ENCODE measurements at regions of chr2 and their contacts with region 1.

Region 1: DNA sequence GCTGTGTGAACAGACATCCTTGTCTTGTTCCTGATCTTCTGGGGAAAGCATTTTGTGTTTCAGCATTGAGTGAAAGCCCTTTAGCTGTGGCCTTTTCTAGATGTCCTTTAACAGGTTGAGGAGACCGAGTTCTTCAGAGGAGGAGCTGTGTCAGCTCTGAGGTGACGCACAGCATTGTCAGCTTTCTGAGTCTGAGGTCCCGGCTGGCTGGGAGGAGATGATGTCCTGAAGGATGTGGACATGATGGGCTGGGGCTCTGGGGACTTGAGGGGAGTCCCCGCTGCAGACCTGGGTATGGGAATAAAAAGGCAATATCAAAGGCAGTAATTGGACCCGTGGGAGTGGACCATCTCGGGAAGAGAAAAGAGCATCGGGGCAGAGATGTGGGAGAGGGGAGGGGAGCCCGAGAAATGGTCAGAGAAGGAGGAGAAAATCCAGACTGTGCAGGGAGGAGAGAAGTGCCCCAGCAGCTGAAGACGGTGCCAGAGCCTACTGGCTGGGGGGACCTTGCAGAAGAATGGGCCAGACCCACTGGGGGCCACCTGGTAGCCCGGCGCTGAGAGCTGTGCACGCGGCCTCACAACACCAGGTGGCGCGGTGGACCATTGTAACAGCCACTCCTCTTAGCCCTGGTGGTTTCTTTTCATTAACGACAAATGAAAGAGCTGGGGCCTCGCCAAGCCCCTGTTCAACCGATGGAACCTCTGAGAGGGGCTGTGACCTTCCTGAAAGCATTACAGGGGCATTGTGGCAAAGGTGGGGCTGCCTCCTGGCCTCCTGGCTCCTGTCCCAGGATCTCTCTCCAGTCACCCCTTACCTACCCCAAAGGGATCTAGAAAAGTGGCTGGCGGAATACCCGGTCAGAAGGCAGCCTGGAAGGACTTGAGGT is 61.6 kb downstream of the ST3GAL5 start:
- DNase-seq: no peak
- H3K4me3 ChIP-seq: no peak overlapping the region
- H3K27me3 ChIP-seq: no peaks in the 10 kb centered on the region; the same call in 1 of the 2 replicates
- CTCF ChIP-seq: peak; percentile 93

Region 2: GRCh38 chr2:85838181-85838580 is 10.9 kb after region 1 on chr2:
- CTCF ChIA-PET with region 1: interaction called, 15 read pairs
- POLR2A ChIA-PET with region 1: no interaction called
- DNase-seq: no peak
- H3K4me3 ChIP-seq: no peak overlapping the region
- H3K27me3 ChIP-seq: no peaks in the 10 kb centered on the region
- CTCF ChIP-seq: no peak

Region 3: DNA sequence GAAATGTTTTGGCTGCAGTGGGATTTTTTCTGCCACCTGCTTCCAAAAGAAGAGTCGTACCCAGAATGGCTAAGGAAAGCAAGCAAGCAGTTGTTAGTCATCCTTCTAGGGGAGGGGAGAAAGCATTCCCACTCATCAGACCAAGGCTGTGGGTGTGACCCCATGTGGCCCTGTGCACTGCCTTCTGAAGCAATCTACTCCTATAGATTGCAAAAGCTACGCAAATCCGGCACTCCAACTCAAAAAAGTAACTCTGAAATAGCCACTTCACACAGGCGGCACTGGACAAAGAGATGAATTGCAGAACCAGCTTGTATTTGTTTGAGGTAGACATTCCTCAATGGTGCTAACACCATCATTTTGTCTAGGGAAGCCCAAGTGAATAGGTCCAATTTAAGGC is 17.3 kb after region 1 on chr2:
- CTCF ChIA-PET with region 1: interaction called, 11 read pairs
- POLR2A ChIA-PET with region 1: no interaction called
- DNase-seq: no peak
- H3K4me3 ChIP-seq: no peak overlapping the region
- H3K27me3 ChIP-seq: no peaks in the 10 kb centered on the region
- CTCF ChIP-seq: no peak

Region 4: DNA sequence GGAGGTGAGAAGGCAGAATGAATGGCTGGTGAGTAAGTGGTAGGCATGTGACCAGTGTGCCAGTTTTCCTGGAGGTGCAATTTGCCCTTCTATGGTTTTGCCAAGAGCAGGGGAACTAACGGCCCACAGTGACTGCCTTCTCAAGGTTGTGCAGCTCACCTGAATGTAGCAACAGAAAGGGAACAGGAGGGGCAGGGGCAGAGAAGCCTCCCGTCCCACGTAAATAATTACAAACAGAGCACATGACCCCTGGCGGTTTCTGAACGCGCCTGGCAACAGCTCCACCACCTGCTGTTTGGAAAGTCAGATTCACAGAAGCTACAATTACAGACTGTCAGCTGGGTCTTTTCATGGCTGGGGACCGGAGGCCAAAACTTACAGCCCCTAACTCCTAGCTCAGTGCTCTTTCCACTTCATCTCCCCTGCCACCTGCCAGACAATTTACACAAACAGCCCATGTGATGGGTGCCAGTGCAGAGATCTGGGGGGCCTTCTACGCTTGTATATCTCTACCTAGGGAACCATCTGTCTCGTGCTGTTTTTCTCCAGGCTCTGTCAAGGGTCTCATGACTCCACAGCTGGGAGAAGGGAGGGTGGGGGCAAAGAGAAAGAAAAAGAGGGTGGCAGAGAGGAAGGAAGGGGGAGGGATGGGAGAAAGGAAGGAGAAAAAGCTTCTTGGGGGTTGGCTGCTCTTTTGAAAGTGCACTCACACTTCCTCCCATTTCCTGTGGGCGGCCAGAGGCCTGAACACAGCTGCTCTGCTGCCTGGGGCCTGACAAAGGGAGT is 208.8 kb after region 1 on chr2:
- CTCF ChIA-PET with region 1: interaction called, 14 read pairs
- POLR2A ChIA-PET with region 1: no interaction called
- DNase-seq: peak; percentile 53
- H3K4me3 ChIP-seq: no peak overlapping the region
- H3K27me3 ChIP-seq: no peaks in the 10 kb centered on the region
- CTCF ChIP-seq: peak; percentile 53

Region 5: GRCh38 chr2:86072271-86072858 is 245.1 kb after region 1 on chr2:
- CTCF ChIA-PET with region 1: interaction called, 354 read pairs
- POLR2A ChIA-PET with region 1: no interaction called
- DNase-seq: no peak
- H3K4me3 ChIP-seq: no peak overlapping the region
- H3K27me3 ChIP-seq: no peaks in the 10 kb centered on the region
- CTCF ChIP-seq: no peak

Region 6: DNA sequence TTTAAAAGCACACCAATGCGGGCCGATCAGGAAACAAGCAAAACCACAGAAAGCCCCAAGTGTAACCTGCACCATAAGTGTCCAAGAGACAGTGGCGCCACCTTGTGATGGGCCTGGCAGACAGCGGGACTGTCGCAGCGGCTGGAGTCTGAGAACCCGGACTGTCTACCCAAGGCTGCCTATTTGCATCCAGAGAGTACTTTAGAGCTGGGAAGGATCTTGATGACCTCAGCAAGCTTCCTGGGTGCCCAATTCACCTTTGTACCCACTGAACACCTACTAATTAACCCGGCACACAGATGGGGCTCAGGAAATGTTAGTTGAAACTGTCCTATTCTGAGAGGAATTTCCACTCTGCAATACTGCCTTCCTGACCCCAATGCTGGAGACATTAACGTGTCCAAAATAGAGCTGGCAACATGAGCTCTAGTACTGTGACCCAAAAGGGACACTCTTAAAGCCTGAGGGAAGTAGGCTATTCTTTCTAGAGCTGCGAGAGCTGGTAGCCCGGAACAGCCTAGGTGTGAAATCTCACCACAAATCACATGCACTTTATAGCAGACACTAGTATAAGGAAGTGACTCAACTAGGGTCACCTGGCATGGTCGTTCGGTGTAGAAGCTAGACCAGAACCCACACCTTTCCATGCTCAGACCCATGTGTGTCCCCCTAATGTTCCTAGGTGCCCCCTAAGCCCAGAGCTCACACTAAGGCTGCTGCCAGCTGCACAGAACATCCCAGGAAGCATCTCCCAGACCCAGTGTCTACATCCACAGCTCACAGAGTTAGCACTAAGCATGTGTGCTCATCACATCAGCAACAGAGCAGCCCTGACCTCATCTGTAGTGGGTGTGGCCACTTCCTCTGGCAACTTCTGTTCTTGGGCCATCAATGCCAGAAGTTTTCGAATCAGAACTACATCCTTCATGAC is 253.0 kb after region 1 on chr2:
- CTCF ChIA-PET with region 1: interaction called, 354 read pairs
- POLR2A ChIA-PET with region 1: no interaction called
- DNase-seq: no peak
- H3K4me3 ChIP-seq: no peak overlapping the region
- H3K27me3 ChIP-seq: no peaks in the 10 kb centered on the region
- CTCF ChIP-seq: peak; percentile 91

Region 7: GRCh38 chr2:86087936-86088850 is 261.0 kb after region 1 on chr2:
- CTCF ChIA-PET with region 1: interaction called, 354 read pairs
- POLR2A ChIA-PET with region 1: no interaction called
- DNase-seq: no peak
- H3K4me3 ChIP-seq: no peak overlapping the region
- H3K27me3 ChIP-seq: no peaks in the 10 kb centered on the region
- CTCF ChIP-seq: peak; percentile 40; the same call in 1 of the 2 replicates